MCF 10A (cell line): ENCODE measurements at regions of chr5 and their contacts with region 1.

Region 1: DNA sequence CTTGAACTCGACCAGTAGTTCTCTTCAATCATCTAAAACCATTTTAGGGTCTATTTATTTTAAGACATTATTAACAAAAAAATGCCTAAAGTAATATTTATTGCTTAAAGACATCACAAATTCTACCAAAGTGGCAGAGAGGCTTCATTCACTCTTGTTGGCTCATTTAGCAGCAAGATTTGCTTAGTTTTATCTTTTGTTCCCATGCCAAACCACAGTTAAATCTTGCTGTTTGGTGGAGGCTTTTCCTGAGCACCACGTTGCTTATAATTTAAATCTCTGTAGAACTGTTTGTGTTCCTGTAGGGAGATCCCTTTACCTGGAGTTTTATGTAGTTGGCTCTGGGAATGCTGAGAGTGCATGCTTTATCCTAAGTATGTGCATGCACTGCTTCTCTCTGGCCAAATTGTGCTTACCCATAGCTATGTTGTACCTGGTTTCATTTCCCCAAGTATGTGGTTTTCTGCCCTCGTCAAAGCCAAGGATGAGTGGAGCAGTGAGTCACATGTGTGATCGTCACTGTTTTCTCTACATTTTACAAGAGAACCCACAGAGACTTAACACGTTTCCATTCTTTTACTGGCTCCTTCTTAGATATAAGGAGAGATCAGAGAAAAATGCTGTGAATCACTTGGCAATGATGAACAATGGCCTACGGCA is 42.1 kb upstream of the MAST4 start:
- DNase-seq: peak; percentile 83
- H3K4me3 Mint-ChIP-seq: peak overlapping the region; percentile 1
- H3K27ac Mint-ChIP-seq: peak overlapping the region; percentile 41
- H3K4me1 Mint-ChIP-seq: peaks cover 7% of the 10 kb centered on the region
- H3K27me3 Mint-ChIP-seq: no peaks in the 10 kb centered on the region
- CTCF ChIP-seq: no peak

Region 2: DNA sequence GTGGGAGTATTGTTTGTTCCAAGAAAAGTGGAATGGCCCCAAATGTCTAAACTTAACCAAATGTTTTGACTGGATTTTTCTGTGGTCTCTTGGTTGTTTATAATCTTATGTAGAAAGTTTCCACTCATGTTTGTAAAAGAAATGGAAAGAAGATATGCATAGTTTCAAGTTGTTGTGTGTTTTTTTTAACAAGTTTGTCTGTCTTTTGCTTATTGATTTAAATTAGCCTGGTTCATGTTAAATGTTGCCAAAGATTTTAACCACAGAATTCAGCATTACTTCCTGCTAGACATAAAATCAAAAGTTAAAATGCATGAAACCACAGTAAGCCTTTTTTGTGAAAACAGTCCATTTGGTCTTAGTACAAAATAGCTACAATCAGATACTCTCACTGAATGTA is 976.9 kb before region 1 on chr5:
- CTCF ChIA-PET with region 1: no interaction called
- POLR2A ChIA-PET with region 1: no interaction called
- intact Hi-C with region 1: no loop called
- DNase-seq: no peak
- H3K4me3 Mint-ChIP-seq: no peak overlapping the region
- H3K27ac Mint-ChIP-seq: no peak overlapping the region
- H3K4me1 Mint-ChIP-seq: no peaks in the 10 kb centered on the region
- H3K27me3 Mint-ChIP-seq: no peaks in the 10 kb centered on the region
- CTCF ChIP-seq: no peak

Region 3: DNA sequence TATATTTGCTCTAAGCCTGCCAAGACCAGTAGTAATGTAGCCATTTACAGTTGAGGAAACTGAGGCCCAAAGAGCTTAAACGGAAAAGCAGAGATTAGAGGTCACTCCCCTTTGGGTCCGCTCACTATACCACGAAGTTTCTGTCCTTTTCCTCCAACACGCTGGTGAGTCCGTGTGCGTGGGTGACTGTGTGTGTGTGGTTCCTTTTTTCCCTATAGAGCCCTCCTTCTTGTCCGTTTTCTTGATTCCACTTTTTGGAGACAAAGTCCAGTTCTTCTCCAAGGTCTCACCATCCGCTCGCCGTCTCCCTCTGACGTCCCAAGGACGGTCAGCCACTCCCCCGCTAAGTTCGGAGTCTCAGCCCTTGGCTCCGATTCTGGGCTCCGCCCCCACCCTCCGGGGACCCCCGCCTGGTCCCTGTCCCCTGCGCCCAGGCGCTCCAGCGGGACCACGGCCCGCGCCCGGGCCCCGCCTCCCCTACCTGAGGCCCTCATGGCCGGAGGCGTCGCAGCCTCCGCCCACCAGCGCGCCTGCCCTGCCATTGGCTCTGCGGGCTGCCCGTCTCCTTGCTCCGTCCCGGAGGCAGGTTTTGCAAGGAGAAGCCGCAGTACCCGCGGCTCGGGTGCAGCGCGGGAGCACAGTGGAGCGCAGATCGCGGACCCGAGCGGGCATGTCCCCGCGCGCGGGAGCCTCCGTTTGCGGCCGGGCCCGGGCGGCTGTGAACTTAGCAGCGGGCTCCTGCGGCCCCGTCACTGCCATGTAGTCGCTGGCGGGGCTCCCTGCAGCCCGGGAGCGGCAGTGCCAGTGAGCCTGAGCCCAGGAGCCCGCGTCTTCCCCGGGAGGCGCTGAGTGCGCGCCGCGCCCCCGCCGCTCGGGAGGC is 42.0 kb after region 1 on chr5 and contains the start of gene MAST4:
- CTCF ChIA-PET with region 1: interaction called, 3 read pairs
- POLR2A ChIA-PET with region 1: interaction called, 11 read pairs
- intact Hi-C with region 1: loop called (anchors 5 kb)
- DNase-seq: peak; percentile 83
- H3K4me3 Mint-ChIP-seq: peak within 1 kb of the TSS; percentile 84
- H3K27ac Mint-ChIP-seq: no peak within 1 kb of the TSS
- H3K4me1 Mint-ChIP-seq: peaks cover 16% of the 10 kb centered on the region
- H3K27me3 Mint-ChIP-seq: peaks cover 80% of the 10 kb centered on the region
- CTCF ChIP-seq: no peak
- total RNA-seq, gene MAST4: 26.5 and 26.8 TPM in 2 replicates